Mammary epithelial cell (primary cell): ENCODE measurements at regions of chr9 and their contacts with region 1.

Region 1: GRCh38 chr9:134738869-134739659 is 97.5 kb downstream of the COL5A1 start:
- DNase-seq: peak; percentile 23
- H3K4me3 ChIP-seq: no peak overlapping the region
- H3K27ac ChIP-seq: no peak overlapping the region
- H3K4me1 ChIP-seq: no peaks in the 10 kb centered on the region
- H3K27me3 ChIP-seq: no peaks in the 10 kb centered on the region
- CTCF ChIP-seq: peak; percentile 26 to 60

Region 2: GRCh38 chr9:134171316-134172197 is 567.5 kb before region 1 on chr9:
- CTCF ChIA-PET with region 1: no interaction called
- dilution Hi-C with region 1: no loop called
- in situ Hi-C with region 1: no loop called
- intact Hi-C with region 1: loop called (anchors 2 kb)
- DNase-seq: peak; percentile 32
- H3K4me3 ChIP-seq: no peak overlapping the region
- H3K27ac ChIP-seq: no peak overlapping the region
- H3K4me1 ChIP-seq: peaks cover 10% of the 10 kb centered on the region
- H3K27me3 ChIP-seq: no peaks in the 10 kb centered on the region
- CTCF ChIP-seq: no peak

Region 3: GRCh38 chr9:134689321-134690181 is 49.5 kb before region 1 on chr9:
- CTCF ChIA-PET with region 1: no interaction called
- dilution Hi-C with region 1: loop called (anchors 5 kb)
- in situ Hi-C with region 1: no loop called
- intact Hi-C with region 1: no loop called
- DNase-seq: peak; percentile 32
- H3K4me3 ChIP-seq: no peak overlapping the region
- H3K27ac ChIP-seq: no peak overlapping the region
- H3K4me1 ChIP-seq: no peaks in the 10 kb centered on the region
- H3K27me3 ChIP-seq: no peaks in the 10 kb centered on the region
- CTCF ChIP-seq: peak; percentile 27 to 51

Region 4: GRCh38 chr9:134698587-134699342 is 40.3 kb before region 1 on chr9:
- CTCF ChIA-PET with region 1: no interaction called
- dilution Hi-C with region 1: loop called (anchors 5 kb)
- in situ Hi-C with region 1: no loop called
- intact Hi-C with region 1: loop called (anchors 1 kb)
- DNase-seq: peak; percentile 4
- H3K4me3 ChIP-seq: no peak overlapping the region
- H3K27ac ChIP-seq: no peak overlapping the region
- H3K4me1 ChIP-seq: no peaks in the 10 kb centered on the region
- H3K27me3 ChIP-seq: no peaks in the 10 kb centered on the region
- CTCF ChIP-seq: peak; percentile 32 to 53

Region 5: GRCh38 chr9:134778841-134779411 is 39.9 kb after region 1 on chr9:
- CTCF ChIA-PET with region 1: no interaction called
- dilution Hi-C with region 1: loop called (anchors 5 kb)
- in situ Hi-C with region 1: no loop called
- intact Hi-C with region 1: no loop called
- DNase-seq: peak; percentile 29
- H3K4me3 ChIP-seq: no peak overlapping the region
- H3K27ac ChIP-seq: no peak overlapping the region
- H3K4me1 ChIP-seq: no peaks in the 10 kb centered on the region
- H3K27me3 ChIP-seq: no peaks in the 10 kb centered on the region
- CTCF ChIP-seq: peak; percentile 14 to 49

Region 6: GRCh38 chr9:134793288-134794188 is 54.5 kb after region 1 on chr9:
- CTCF ChIA-PET with region 1: no interaction called
- dilution Hi-C with region 1: no loop called
- in situ Hi-C with region 1: no loop called
- intact Hi-C with region 1: no loop called
- DNase-seq: no peak
- H3K4me3 ChIP-seq: no peak overlapping the region
- H3K27ac ChIP-seq: no peak overlapping the region
- H3K4me1 ChIP-seq: no peaks in the 10 kb centered on the region
- H3K27me3 ChIP-seq: no peaks in the 10 kb centered on the region
- CTCF ChIP-seq: no peak